Activated CD4-positive, alpha-beta T cell treated with anti-CD3 and anti-CD28 coated beads, Interleukin-2, amount 10 ng/mL, durations not matched to agents 24 days and 14 days (primary cell): ENCODE measurements at regions of chr22 and their contacts with region 1.

Region 1: DNA sequence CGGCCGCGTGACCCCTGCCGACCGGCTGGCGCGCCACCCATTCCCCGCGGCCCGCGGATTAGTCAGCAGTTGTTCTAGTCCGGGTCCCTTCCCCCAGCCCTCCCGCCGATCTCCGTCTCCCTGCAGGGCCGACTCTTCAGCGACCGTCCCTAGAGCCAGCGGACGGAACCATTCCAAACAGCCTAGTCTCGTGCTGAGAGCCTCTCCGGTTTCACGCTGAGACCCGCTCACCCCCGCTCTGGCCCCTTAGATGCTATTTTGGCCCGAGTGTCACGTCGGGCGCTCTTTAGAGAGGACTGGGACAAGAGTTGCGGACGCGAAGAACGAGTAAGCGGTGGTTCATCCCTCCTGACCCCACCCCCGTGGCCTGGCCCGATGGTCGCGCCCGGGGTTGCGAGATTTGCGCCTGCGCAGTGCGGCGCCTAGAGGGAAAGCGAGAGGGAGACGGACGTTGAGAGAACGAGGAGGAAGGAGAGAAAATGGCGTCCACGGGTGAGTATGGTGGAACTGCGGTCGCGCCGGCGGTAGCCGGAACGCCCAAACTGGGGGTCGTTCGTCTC is at the starts of genes EWSR1 and RHBDD3:
- DNase-seq: peak; percentile 99
- H3K4me3 Mint-ChIP-seq: peak within 1 kb of the TSS; percentile 99
- H3K27ac Mint-ChIP-seq: peak within 1 kb of the TSS; percentile 99
- H3K4me1 Mint-ChIP-seq: peaks cover 40% of the 10 kb centered on the region
- H3K27me3 Mint-ChIP-seq: peaks cover 3% of the 10 kb centered on the region
- total RNA-seq, gene EWSR1: 445 and 446 TPM in 2 replicates
- total RNA-seq, gene RHBDD3: 49.5 and 51.9 TPM in 2 replicates

Region 2: GRCh38 chr22:29284196-29284595 is 16.3 kb after region 1 on chr22:
- intact Hi-C with region 1: loop called (anchors 2 kb)
- DNase-seq: no peak
- H3K4me3 Mint-ChIP-seq: no peak overlapping the region
- H3K27ac Mint-ChIP-seq: no peak overlapping the region
- H3K4me1 Mint-ChIP-seq: peaks cover 9% of the 10 kb centered on the region
- H3K27me3 Mint-ChIP-seq: no peaks in the 10 kb centered on the region

Region 3: GRCh38 chr22:29306175-29306834 is 38.4 kb after region 1 on chr22 and contains the start of gene GAS2L1:
- intact Hi-C with region 1: loop called (anchors 2 kb)
- DNase-seq: peak; percentile 87
- H3K4me3 Mint-ChIP-seq: peak within 1 kb of the TSS; percentile 83
- H3K27ac Mint-ChIP-seq: peak within 1 kb of the TSS; percentile 58
- H3K4me1 Mint-ChIP-seq: peaks cover 5% of the 10 kb centered on the region
- H3K27me3 Mint-ChIP-seq: peaks cover 10% of the 10 kb centered on the region
- total RNA-seq, gene GAS2L1: 1.5 and 2.6 TPM in 2 replicates